ENCODE measurements at regions of chr3 and their contacts with region 1.

Region 1: DNA sequence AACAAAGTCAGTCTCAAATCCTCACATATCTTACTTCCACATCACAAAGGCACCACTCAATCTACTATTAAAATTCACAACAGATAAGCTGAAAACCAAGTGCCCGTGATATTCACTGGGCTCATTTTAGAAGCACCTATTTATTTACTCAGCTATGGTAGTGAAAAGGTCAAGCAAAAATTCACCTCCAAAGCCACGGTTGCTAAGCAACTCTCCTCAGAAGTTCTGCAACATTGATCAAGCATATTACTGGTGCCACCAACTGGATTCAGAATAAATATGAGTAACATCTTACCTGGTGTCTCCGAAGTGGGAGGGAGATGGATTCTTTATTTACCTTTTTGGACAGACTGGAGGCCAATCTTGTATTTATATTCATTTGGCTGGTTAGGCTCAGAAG is 714.8 kb downstream of the FHIT start:
- DNase-seq: no peak
- ATAC-seq: no peak
- H3K4me3 ChIP-seq: no peak overlapping the region
- H3K27ac ChIP-seq: no peak overlapping the region
- H3K4me1 ChIP-seq: no peaks in the 10 kb centered on the region
- H3K27me3 ChIP-seq: no peaks in the 10 kb centered on the region
- CTCF ChIP-seq: no peak
- POLR2A ChIP-seq: no peak
- RAD21 ChIP-seq: no peak

Region 2: GRCh38 chr3:60475096-60475495 is 61.3 kb before region 1 on chr3:
- CTCF ChIA-PET with region 1: no interaction called
- POLR2A ChIA-PET with region 1: no interaction called
- dilution Hi-C with region 1: no loop called
- in situ Hi-C with region 1: no loop called
- intact Hi-C with region 1: no loop called
- DNase-seq: no peak
- ATAC-seq: no peak
- H3K4me3 ChIP-seq: no peak overlapping the region
- H3K27ac ChIP-seq: no peak overlapping the region
- H3K4me1 ChIP-seq: no peaks in the 10 kb centered on the region
- H3K27me3 ChIP-seq: no peaks in the 10 kb centered on the region
- CTCF ChIP-seq: no peak
- POLR2A ChIP-seq: no peak
- RAD21 ChIP-seq: no peak

Region 3: DNA sequence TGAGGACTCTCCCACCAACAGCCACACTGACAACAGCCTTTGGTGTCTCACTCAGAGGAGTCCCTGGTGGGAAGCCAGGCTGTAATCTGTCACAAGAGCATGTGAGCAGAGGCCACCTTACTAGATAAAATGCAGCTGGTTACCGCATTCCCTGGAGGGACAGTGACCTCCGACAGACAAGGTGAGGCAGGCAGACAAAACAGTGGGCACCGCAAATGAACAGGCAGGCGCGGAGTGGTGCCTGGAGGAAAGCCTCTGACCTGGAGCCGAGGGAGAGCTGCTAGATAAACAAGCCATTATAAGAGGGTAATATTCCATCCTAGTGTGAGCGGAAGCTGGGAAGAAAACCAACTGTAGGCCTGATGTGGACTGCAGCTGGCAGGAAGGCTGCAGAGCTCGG is 21.6 kb before region 1 on chr3:
- CTCF ChIA-PET with region 1: no interaction called
- POLR2A ChIA-PET with region 1: no interaction called
- dilution Hi-C with region 1: no loop called
- in situ Hi-C with region 1: no loop called
- intact Hi-C with region 1: loop called (anchors 1 kb)
- DNase-seq: no peak
- ATAC-seq: no peak
- H3K4me3 ChIP-seq: no peak overlapping the region
- H3K27ac ChIP-seq: no peak overlapping the region
- H3K4me1 ChIP-seq: no peaks in the 10 kb centered on the region
- H3K27me3 ChIP-seq: no peaks in the 10 kb centered on the region
- CTCF ChIP-seq: no peak
- POLR2A ChIP-seq: no peak
- RAD21 ChIP-seq: no peak

Region 4: GRCh38 chr3:60854791-60855190 is 318.4 kb after region 1 on chr3:
- CTCF ChIA-PET with region 1: no interaction called
- POLR2A ChIA-PET with region 1: no interaction called
- dilution Hi-C with region 1: no loop called
- in situ Hi-C with region 1: no loop called
- intact Hi-C with region 1: no loop called
- DNase-seq: no peak
- ATAC-seq: no peak
- H3K4me3 ChIP-seq: no peak overlapping the region
- H3K27ac ChIP-seq: no peak overlapping the region
- H3K4me1 ChIP-seq: no peaks in the 10 kb centered on the region
- H3K27me3 ChIP-seq: no peaks in the 10 kb centered on the region
- CTCF ChIP-seq: no peak
- POLR2A ChIP-seq: no peak
- RAD21 ChIP-seq: no peak

Measured in IMR-90 (cell line).